Activated CD4-positive, alpha-beta T cell treated with anti-CD3 and anti-CD28 coated beads for 36 hours (primary cell): ENCODE measurements at regions of chr1 and their contacts with region 1.

Region 1: GRCh38 chr1:245156081-245156735 is 1.4 kb downstream of the KIF26B start:
- DNase-seq: peak; percentile 94
- ATAC-seq: peak; percentile 93
- H3K4me3 Mint-ChIP-seq: peak overlapping the region; percentile 65
- H3K27ac Mint-ChIP-seq: no peak overlapping the region
- H3K4me1 Mint-ChIP-seq: peaks cover 25% of the 10 kb centered on the region
- H3K27me3 Mint-ChIP-seq: peaks cover 59% of the 10 kb centered on the region

Region 2: DNA sequence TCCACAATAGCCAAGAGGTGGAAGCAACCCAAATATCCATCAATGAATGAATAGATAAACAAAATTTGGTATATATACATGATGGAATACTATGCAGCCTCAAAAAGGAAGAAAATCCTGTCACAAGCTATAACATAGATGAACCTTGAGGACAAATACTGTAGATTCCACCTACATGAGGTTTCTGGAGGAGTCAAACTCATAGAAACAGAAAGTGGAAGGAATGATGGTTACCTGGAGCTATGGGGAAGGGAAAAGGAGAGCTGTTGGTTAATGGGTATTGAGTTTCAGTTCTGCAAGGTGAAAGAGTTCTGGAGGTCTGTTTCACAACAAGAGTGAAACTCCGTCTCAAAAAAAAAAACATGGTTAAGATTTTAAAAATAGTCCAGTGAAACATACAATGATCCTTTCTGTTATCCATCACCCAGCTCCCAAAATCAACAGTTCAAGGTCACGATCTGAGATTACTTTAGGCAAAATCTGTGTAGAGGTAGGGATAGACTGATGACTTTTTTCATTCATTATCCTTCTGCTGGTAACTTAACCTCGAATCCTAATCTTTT is 211.0 kb before region 1 on chr1:
- CTCF ChIA-PET with region 1: no interaction called
- POLR2A ChIA-PET with region 1: no interaction called
- intact Hi-C with region 1: no loop called
- DNase-seq: no peak
- ATAC-seq: no peak
- H3K4me3 Mint-ChIP-seq: no peak overlapping the region
- H3K27ac Mint-ChIP-seq: no peak overlapping the region
- H3K4me1 Mint-ChIP-seq: no peaks in the 10 kb centered on the region
- H3K27me3 Mint-ChIP-seq: no peaks in the 10 kb centered on the region

Region 3: DNA sequence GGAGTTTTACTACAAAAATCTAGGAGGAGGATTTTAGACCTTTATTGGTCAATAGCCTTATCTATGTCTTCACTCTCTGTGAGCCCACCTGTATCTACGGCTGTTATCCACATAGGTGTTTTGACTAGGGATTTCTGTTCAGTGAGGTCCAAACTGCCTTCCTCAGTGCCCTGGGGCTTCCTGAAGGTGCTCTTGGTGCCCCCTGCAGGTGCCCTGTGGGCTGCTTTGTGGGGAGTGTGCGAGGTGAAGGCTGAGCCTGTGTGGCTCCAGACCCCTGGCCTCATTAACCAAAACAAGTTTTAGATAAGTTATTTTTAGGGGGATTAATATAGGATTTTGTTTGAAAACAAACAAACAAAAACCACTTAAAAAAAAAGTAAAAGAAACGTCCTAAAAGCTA is 121.1 kb after region 1 on chr1:
- CTCF ChIA-PET with region 1: interaction called, 7 read pairs
- POLR2A ChIA-PET with region 1: no interaction called
- intact Hi-C with region 1: loop called in 1 of 2 experiments (anchors 5 kb)
- DNase-seq: peak; percentile 13
- ATAC-seq: no peak
- H3K4me3 Mint-ChIP-seq: no peak overlapping the region
- H3K27ac Mint-ChIP-seq: no peak overlapping the region
- H3K4me1 Mint-ChIP-seq: no peaks in the 10 kb centered on the region
- H3K27me3 Mint-ChIP-seq: peaks cover 7% of the 10 kb centered on the region

Region 4: DNA sequence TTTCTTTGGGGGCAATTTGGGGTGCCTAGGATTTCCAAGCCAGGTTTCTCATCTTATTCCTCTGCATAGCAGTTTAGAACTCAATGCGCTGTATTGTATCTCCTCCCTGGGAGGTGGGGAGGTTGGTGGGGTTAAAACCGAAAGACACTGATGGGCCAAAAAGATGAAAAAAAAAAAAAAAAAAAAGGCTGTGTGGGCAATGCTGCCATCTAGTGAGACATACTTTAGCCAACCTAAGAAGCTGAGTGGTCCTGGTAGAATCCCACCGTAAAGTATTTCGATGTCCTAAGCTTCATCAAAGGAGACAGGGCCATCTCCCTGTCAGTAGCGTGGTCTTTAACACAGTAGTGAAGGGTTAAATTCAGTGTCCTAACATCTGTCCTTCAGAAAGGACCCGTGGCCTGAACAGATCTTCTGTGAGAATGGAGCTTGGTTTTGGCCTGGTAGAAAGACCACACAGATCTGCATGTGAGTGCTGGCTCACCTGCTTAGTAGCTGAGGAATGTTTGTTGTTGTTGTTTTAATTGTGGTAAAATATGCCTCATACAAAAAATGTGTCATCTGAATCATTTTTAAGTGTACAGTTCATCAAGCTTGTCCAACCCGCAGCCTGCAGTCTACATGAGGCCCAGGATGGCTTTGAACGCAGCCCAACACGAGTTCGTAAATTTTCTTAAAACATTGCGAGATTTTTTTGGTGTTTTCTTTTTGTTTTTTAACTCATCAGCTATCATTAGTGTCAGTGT is 224.8 kb after region 1 on chr1:
- CTCF ChIA-PET with region 1: interaction called, 4 read pairs
- POLR2A ChIA-PET with region 1: no interaction called
- intact Hi-C with region 1: loop called (anchors 1 to 2 kb)
- DNase-seq: no peak
- ATAC-seq: no peak
- H3K4me3 Mint-ChIP-seq: no peak overlapping the region
- H3K27ac Mint-ChIP-seq: no peak overlapping the region
- H3K4me1 Mint-ChIP-seq: peaks cover 25% of the 10 kb centered on the region
- H3K27me3 Mint-ChIP-seq: no peaks in the 10 kb centered on the region

Region 5: GRCh38 chr1:246002725-246003441 is 846.7 kb after region 1 on chr1:
- CTCF ChIA-PET with region 1: interaction called, 8 read pairs
- POLR2A ChIA-PET with region 1: no interaction called
- intact Hi-C with region 1: loop called (anchors 1 kb)
- DNase-seq: peak; percentile 92
- ATAC-seq: peak; percentile 74
- H3K4me3 Mint-ChIP-seq: no peak overlapping the region
- H3K27ac Mint-ChIP-seq: no peak overlapping the region
- H3K4me1 Mint-ChIP-seq: no peaks in the 10 kb centered on the region
- H3K27me3 Mint-ChIP-seq: no peaks in the 10 kb centered on the region

Region 6: DNA sequence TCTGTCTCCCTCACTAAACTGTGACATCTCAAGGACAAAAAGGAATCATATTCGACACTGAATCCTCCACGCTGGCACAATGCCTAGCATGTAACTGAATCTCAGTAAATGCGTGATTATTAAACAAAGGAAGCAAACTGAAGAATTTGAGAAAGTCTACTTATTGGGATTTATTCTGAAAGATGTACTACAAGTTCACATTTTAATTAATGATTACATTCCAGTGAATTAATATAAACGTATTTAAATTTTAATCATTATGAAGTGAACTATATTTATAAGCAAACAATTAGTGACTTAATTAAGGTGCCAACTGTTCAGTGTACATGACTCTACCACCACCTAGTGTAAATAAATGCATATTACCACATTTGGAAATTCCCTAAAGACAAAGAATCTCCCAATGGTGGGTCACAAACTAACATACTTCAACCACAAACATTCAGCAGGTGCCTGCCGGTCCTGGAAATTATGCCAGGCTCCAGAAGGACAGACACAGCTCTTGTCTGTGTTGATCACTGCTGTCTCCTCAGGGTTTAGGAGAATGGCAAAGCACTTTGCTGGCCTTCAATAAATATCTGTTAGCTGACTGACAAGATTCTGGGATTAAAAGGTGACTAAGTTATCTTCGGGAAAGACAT is 1294.5 kb after region 1 on chr1:
- CTCF ChIA-PET with region 1: interaction called, 4 read pairs
- POLR2A ChIA-PET with region 1: no interaction called
- intact Hi-C with region 1: loop called in 1 of 2 experiments (anchors 10 kb)
- DNase-seq: no peak
- ATAC-seq: no peak
- H3K4me3 Mint-ChIP-seq: no peak overlapping the region
- H3K27ac Mint-ChIP-seq: no peak overlapping the region
- H3K4me1 Mint-ChIP-seq: peaks cover 13% of the 10 kb centered on the region
- H3K27me3 Mint-ChIP-seq: no peaks in the 10 kb centered on the region

Region 7: GRCh38 chr1:246497331-246497915 is 1341.2 kb after region 1 on chr1:
- CTCF ChIA-PET with region 1: no interaction called
- POLR2A ChIA-PET with region 1: no interaction called
- intact Hi-C with region 1: loop called (anchors 1 to 2 kb)
- DNase-seq: no peak
- ATAC-seq: peak; percentile 78
- H3K4me3 Mint-ChIP-seq: no peak overlapping the region
- H3K27ac Mint-ChIP-seq: no peak overlapping the region
- H3K4me1 Mint-ChIP-seq: peaks cover 10% of the 10 kb centered on the region
- H3K27me3 Mint-ChIP-seq: no peaks in the 10 kb centered on the region

Region 8: DNA sequence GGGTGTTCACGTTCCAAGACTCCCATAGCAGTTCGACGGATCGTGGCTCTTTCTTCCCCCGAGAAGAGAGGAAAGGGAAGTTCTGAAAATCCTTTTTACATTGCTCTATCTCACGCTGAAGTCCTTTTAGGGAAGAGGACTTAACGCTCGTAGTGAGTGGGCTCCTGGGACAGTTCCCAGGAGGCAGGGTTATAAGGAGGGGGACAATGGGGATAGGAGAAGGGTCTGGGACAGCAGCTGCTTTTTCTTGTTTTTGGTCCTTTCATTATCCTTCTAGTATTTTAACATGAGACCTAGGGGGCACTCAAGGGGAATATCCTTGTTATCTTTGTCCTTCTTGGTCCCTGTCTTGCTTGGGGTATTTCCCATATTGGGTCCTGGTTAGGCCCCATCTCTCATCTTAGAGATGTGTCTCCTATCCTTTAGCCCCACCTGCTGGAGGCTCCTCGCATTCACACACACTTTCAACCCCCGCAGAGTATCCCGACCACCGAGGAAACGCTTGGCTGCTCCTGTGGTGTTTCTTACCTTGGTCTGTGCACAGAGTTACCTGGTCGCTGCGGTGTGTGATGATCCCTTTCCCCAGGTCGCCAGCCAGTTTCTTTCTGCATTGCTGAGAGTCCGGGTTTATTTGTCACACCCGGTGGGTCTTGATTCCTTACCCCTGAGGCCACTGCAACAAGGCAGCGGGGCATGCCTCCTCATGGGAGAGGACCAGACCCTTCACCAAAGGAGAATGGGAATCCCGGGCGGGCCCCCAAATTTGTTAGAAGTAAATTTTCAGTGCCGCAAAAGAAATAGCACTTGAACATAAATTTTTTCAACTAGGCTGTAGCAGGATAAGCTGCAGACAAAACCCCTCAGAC is 1597.7 kb after region 1 on chr1:
- CTCF ChIA-PET with region 1: interaction called, 3 read pairs
- POLR2A ChIA-PET with region 1: no interaction called
- intact Hi-C with region 1: loop called in 1 of 2 experiments (anchors 2 kb)
- DNase-seq: peak; percentile 78
- ATAC-seq: peak; percentile 91
- H3K4me3 Mint-ChIP-seq: no peak overlapping the region
- H3K27ac Mint-ChIP-seq: no peak overlapping the region
- H3K4me1 Mint-ChIP-seq: no peaks in the 10 kb centered on the region
- H3K27me3 Mint-ChIP-seq: no peaks in the 10 kb centered on the region